ENCODE measurements at regions of chr2 and their contacts with region 1.

Region 1: DNA sequence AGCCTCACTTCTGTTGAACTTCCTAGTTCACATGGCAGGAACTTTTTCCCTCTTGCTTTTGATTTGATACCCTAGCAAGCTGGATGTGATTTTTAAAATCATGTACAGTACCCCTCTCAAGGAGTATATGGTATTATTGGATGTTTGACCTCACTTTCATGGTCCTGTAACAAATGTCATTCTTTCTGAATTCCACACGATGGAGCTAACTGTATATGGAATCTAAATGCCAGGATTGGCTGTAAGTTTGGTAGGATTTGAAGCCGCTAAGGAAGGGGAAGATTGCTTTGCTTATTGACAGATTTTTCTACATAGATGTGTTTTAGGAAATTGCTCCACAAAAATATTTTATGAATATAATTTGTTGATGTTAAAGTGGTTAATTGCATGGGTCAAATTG is 18.3 kb downstream of the MAIP1 start:
- DNase-seq: peak; percentile 57
- H3K4me3 ChIP-seq: no peak overlapping the region
- H3K27ac ChIP-seq: no peak overlapping the region
- H3K4me1 ChIP-seq: peaks cover 4% of the 10 kb centered on the region
- H3K27me3 ChIP-seq: no peaks in the 10 kb centered on the region
- CTCF ChIP-seq: peak; percentile 13 to 46
- POLR2A ChIP-seq: no peak

Region 2: GRCh38 chr2:199903111-199903510 is 70.6 kb before region 1 on chr2:
- CTCF ChIA-PET with region 1: no interaction called
- POLR2A ChIA-PET with region 1: no interaction called
- dilution Hi-C with region 1: no loop called
- intact Hi-C with region 1: no loop called
- DNase-seq: no peak
- H3K4me3 ChIP-seq: no peak overlapping the region
- H3K27ac ChIP-seq: no peak overlapping the region
- H3K4me1 ChIP-seq: no peaks in the 10 kb centered on the region
- H3K27me3 ChIP-seq: peaks cover 0 to 7% of the 10 kb centered on the region in 2 experiments
- CTCF ChIP-seq: no peak
- POLR2A ChIP-seq: no peak

Region 3: DNA sequence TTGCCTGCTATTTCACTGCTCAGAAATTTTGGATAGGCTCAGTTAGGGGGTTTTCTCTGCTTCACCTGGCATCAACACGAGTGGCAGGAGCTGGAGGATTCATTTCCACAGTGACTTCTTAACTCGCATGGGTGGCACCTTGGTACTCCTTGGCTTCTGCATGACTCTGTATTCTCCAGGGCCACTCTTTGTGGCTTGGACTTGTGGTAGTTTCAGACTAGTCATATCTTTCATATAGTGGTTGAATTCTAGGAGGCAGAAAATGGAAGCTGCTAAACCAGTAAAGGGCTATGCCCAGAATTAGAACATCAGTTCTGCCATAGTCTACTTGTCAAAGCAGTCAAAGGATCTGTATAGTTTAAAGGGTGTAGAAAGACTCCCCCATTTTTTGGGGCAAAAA is 11.5 kb before region 1 on chr2:
- CTCF ChIA-PET with region 1: interaction called, 14 read pairs
- POLR2A ChIA-PET with region 1: no interaction called
- dilution Hi-C with region 1: no loop called
- intact Hi-C with region 1: no loop called
- DNase-seq: no peak
- H3K4me3 ChIP-seq: no peak overlapping the region
- H3K27ac ChIP-seq: no peak overlapping the region
- H3K4me1 ChIP-seq: no peaks in the 10 kb centered on the region
- H3K27me3 ChIP-seq: no peaks in the 10 kb centered on the region
- CTCF ChIP-seq: no peak
- POLR2A ChIP-seq: no peak

Region 4: DNA sequence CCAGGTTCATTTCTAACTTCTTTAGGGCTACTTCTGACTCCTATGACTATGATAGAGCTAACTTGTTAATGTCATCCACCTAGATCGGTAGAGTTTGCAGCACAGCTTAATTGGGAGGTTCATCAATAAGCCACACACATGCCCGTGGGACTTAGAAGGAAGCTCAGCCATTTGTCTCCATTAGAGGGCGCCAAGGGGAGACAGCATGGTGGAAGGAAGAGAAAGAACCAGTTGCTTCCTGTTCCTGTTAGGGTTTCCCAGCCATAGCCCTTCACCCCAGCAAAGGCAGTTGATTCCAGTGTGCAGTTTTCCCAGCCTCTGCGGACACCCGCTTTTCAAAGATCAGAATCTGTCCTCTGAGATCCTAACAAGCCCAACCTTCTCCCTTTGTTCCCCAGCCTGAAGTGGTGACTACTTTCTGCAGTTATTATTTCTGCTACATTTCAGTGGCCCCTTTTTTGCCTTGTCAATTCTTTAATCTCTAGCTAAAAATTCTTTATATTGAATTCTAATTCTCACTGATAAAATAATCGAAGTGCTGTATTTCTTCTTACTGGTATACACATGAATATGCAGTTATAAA is 12.0 kb after region 1 on chr2:
- CTCF ChIA-PET with region 1: interaction called, 11 read pairs
- POLR2A ChIA-PET with region 1: no interaction called
- dilution Hi-C with region 1: no loop called
- intact Hi-C with region 1: no loop called
- DNase-seq: peak; percentile 43
- H3K4me3 ChIP-seq: no peak overlapping the region
- H3K27ac ChIP-seq: no peak overlapping the region
- H3K4me1 ChIP-seq: peaks cover 8% of the 10 kb centered on the region
- H3K27me3 ChIP-seq: peaks cover 2 to 3% of the 10 kb centered on the region in 2 experiments
- CTCF ChIP-seq: peak; percentile 56 to 68
- POLR2A ChIP-seq: no peak

Region 5: DNA sequence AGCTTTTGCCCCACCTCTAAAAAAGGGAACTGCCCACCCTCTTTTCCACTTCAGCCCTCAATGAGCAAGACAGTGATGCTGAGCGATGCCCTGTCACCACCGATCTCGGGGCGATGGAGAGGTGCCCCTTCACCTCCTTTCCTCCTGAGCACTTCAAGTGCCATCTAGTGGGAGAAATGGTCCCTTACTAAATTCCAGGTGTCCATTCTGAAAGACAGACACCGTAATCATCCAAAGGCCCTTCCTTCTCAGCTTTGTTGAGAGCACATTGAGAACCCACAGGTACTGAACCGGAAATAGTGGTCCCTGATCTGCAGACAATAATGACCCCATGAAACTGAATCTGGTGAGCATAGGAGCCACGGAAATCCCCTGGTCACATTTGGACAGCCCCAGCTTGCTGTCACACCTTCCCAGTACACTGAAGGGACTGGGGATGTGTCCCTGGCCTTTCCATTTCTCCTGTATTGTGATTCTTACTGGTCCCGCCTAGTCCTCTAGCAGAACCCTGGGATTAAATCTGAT is 497.7 kb after region 1 on chr2:
- CTCF ChIA-PET with region 1: interaction called, 20 read pairs
- POLR2A ChIA-PET with region 1: no interaction called
- dilution Hi-C with region 1: no loop called
- intact Hi-C with region 1: no loop called
- DNase-seq: peak; percentile 21
- H3K4me3 ChIP-seq: no peak overlapping the region
- H3K27ac ChIP-seq: no peak overlapping the region
- H3K4me1 ChIP-seq: no peaks in the 10 kb centered on the region
- H3K27me3 ChIP-seq: no peaks in the 10 kb centered on the region
- CTCF ChIP-seq: peak; percentile 30 to 45
- POLR2A ChIP-seq: no peak

Region 6: DNA sequence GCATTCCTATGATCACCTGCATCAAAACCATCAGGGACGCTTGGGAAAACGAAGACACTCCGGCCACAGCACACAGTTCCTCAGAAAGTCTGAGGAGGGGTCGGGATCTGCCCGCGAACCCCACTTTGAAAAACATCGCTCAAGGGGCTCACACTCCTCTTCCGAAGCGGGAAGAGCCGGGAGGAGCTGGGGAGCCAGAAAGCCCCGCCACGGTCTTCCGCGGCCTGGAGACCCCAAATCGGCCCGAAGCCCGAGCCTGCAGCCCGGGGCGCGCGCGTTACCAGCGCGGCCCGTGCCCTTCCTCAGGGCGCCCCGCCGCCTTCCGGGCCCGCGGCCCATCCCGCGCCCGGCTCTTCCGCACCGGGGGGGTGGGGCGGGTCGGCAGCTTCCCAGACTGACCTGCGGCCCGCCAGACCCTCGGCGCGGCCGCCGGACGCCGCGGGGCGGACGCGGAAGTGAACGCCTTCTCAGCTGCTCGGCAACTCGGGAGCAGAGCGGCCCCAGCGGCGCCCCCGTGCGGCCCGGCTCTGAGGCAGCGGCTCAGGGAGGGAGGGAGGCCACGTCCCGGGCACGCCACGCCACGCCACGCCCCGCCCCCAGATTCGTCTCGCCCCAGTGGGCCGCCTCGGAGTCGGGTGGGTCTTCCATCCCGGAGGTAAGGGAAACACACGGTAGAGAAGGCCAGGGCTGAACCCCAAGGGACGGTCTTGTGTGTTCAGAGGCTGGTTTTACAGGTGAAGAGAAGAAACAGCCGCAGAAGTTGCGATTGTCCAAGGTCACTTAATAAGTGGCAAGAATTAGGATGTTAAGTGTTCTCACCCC is 536.1 kb after region 1 on chr2 and contains the start of gene KCTD18:
- CTCF ChIA-PET with region 1: interaction called, 12 read pairs
- POLR2A ChIA-PET with region 1: no interaction called
- dilution Hi-C with region 1: no loop called
- intact Hi-C with region 1: no loop called
- DNase-seq: peak; percentile 86
- H3K4me3 ChIP-seq: peak within 1 kb of the TSS; percentile 45 to 64 (median 62)
- H3K27ac ChIP-seq: peak within 1 kb of the TSS; percentile 23
- H3K4me1 ChIP-seq: peaks cover 7% of the 10 kb centered on the region
- H3K27me3 ChIP-seq: peaks cover 21 to 36% of the 10 kb centered on the region in 2 experiments
- CTCF ChIP-seq: peak; percentile 88 to 91
- POLR2A ChIP-seq: peak; percentile 73
- total RNA-seq, gene KCTD18: 5.4 and 6.6 TPM in 2 replicates

Region 7: DNA sequence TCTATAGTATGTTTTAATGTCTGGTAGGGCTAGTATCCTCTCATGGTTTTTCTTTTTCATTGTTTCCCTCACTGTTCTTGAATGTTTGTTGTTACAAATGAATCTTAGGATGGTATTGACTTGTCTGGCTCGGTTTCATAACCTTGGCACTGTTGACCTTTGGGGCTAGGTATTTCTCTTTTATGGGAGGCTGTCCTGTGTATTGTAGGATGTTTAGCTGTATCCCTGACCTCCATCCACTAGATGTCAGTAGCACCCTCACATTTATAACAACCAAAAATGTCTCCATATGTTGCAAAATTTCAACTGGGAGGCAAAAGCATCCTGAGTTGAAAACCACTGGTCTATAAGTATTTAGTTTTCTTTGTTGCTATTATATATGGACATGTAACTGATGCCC is 605.1 kb after region 1 on chr2:
- CTCF ChIA-PET with region 1: interaction called, 4 read pairs
- POLR2A ChIA-PET with region 1: no interaction called
- dilution Hi-C with region 1: no loop called
- intact Hi-C with region 1: loop called (anchors 1 kb)
- DNase-seq: peak; percentile 9
- H3K4me3 ChIP-seq: no peak overlapping the region
- H3K27ac ChIP-seq: no peak overlapping the region
- H3K4me1 ChIP-seq: no peaks in the 10 kb centered on the region
- H3K27me3 ChIP-seq: no peaks in the 10 kb centered on the region
- CTCF ChIP-seq: peak; percentile 26 to 28
- POLR2A ChIP-seq: no peak

Region 8: DNA sequence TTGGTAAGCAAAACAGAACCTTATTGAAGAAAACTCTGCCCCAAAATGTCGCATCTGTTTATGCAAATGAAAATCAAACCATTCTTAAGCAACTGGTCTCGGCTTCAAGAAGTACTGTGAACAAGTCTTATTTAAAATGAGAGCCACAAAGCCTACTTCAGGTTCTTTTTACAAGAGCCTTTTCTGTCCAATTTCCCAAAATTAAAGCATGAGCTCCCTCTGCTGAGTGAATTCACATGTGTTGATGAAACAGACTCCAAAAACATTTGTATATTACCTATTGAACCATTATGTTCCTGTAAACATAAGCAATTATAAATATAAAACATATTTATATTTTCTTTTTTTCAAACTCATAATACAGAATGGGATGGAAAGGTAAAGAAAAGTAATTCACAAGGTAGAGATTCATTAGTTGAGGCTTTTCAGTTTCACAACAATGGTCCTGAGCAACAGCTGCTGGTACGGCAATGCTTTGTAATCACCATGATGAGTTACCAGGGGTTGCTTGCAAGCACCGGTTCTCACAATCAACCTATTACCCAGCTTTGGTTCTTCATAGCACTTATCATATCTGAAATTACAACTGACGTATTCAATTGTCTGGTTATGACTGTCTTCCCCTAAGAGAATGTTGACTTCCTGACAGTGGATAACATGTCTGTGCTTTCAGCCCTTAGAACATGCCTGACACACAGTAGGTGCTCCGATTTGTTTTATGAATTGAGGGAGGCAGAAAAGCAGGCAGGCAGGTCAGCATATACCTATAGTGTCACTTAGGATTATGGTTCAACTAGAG is 729.6 kb after region 1 on chr2:
- CTCF ChIA-PET with region 1: interaction called, 97 read pairs
- POLR2A ChIA-PET with region 1: no interaction called
- dilution Hi-C with region 1: no loop called
- intact Hi-C with region 1: loop called (anchors 1 kb)
- DNase-seq: peak; percentile 58
- H3K4me3 ChIP-seq: no peak overlapping the region
- H3K27ac ChIP-seq: no peak overlapping the region
- H3K4me1 ChIP-seq: no peaks in the 10 kb centered on the region
- H3K27me3 ChIP-seq: peaks cover 16 to 22% of the 10 kb centered on the region in 2 experiments
- CTCF ChIP-seq: peak; percentile 17 to 21
- POLR2A ChIP-seq: no peak

Measured in endothelial cell of umbilical vein (primary cell).